ENCODE measurements at regions of chr13 and their contacts with region 1.

Region 1: GRCh38 chr13:67230404-67231288 is 510 bp upstream of the PCDH9 start:
- DNase-seq: peak; percentile 97
- ATAC-seq: peak; percentile 94
- H3K4me3 ChIP-seq: peak overlapping the region; percentile 76
- H3K27ac ChIP-seq: peak overlapping the region; percentile 59
- H3K4me1 ChIP-seq: no peaks in the 10 kb centered on the region; the same call in 1 of the 2 replicates
- H3K27me3 ChIP-seq: no peaks in the 10 kb centered on the region
- CTCF ChIP-seq: no peak
- POLR2A ChIP-seq: no peak; the same call in 1 of the 2 replicates
- RAD21 ChIP-seq: peak; percentile 1; the same call in 1 of the 2 replicates

Region 2: GRCh38 chr13:66618702-66619101 is 611.9 kb before region 1 on chr13:
- CTCF ChIA-PET with region 1: no interaction called
- POLR2A ChIA-PET with region 1: no interaction called
- dilution Hi-C with region 1: no loop called
- in situ Hi-C with region 1: loop called (anchors 5 kb)
- intact Hi-C with region 1: no loop called
- DNase-seq: peak; percentile 63
- ATAC-seq: peak; percentile 83
- H3K4me3 ChIP-seq: no peak overlapping the region
- H3K27ac ChIP-seq: no peak overlapping the region
- H3K4me1 ChIP-seq: no peaks in the 10 kb centered on the region
- H3K27me3 ChIP-seq: no peaks in the 10 kb centered on the region
- CTCF ChIP-seq: peak; percentile 59
- POLR2A ChIP-seq: no peak
- RAD21 ChIP-seq: peak; percentile 62

Region 3: GRCh38 chr13:66899955-66900354 is 330.7 kb before region 1 on chr13:
- CTCF ChIA-PET with region 1: no interaction called
- POLR2A ChIA-PET with region 1: no interaction called
- dilution Hi-C with region 1: no loop called
- in situ Hi-C with region 1: no loop called
- intact Hi-C with region 1: loop called (anchors 1 kb)
- DNase-seq: peak; percentile 5
- ATAC-seq: no peak
- H3K4me3 ChIP-seq: no peak overlapping the region
- H3K27ac ChIP-seq: no peak overlapping the region
- H3K4me1 ChIP-seq: no peaks in the 10 kb centered on the region
- H3K27me3 ChIP-seq: no peaks in the 10 kb centered on the region
- CTCF ChIP-seq: no peak
- POLR2A ChIP-seq: no peak
- RAD21 ChIP-seq: no peak

Region 4: GRCh38 chr13:67147342-67148133 is 83.1 kb before region 1 on chr13:
- CTCF ChIA-PET with region 1: no interaction called
- POLR2A ChIA-PET with region 1: no interaction called
- dilution Hi-C with region 1: no loop called
- in situ Hi-C with region 1: no loop called
- intact Hi-C with region 1: no loop called
- DNase-seq: peak; percentile 72
- ATAC-seq: peak; percentile 89
- H3K4me3 ChIP-seq: no peak overlapping the region
- H3K27ac ChIP-seq: peak overlapping the region; percentile 44; the same call in 1 of the 2 replicates
- H3K4me1 ChIP-seq: peaks cover 6% of the 10 kb centered on the region
- H3K27me3 ChIP-seq: no peaks in the 10 kb centered on the region
- CTCF ChIP-seq: no peak
- POLR2A ChIP-seq: no peak
- RAD21 ChIP-seq: no peak

Region 5: GRCh38 chr13:67416047-67416925 is 185.6 kb after region 1 on chr13:
- CTCF ChIA-PET with region 1: interaction called, 4 read pairs
- POLR2A ChIA-PET with region 1: no interaction called
- dilution Hi-C with region 1: no loop called
- in situ Hi-C with region 1: no loop called
- intact Hi-C with region 1: loop called (anchors 2 kb)
- DNase-seq: peak; percentile 29
- ATAC-seq: peak; percentile 97
- H3K4me3 ChIP-seq: no peak overlapping the region
- H3K27ac ChIP-seq: no peak overlapping the region
- H3K4me1 ChIP-seq: no peaks in the 10 kb centered on the region
- H3K27me3 ChIP-seq: no peaks in the 10 kb centered on the region
- CTCF ChIP-seq: peak; percentile 73
- POLR2A ChIP-seq: no peak
- RAD21 ChIP-seq: peak; percentile 80

Measured in IMR-90 (cell line).